Heart right ventricle (tissue), 16 donors: ENCODE measurements at regions of chr15 and their contacts with region 1.

Region 1: DNA sequence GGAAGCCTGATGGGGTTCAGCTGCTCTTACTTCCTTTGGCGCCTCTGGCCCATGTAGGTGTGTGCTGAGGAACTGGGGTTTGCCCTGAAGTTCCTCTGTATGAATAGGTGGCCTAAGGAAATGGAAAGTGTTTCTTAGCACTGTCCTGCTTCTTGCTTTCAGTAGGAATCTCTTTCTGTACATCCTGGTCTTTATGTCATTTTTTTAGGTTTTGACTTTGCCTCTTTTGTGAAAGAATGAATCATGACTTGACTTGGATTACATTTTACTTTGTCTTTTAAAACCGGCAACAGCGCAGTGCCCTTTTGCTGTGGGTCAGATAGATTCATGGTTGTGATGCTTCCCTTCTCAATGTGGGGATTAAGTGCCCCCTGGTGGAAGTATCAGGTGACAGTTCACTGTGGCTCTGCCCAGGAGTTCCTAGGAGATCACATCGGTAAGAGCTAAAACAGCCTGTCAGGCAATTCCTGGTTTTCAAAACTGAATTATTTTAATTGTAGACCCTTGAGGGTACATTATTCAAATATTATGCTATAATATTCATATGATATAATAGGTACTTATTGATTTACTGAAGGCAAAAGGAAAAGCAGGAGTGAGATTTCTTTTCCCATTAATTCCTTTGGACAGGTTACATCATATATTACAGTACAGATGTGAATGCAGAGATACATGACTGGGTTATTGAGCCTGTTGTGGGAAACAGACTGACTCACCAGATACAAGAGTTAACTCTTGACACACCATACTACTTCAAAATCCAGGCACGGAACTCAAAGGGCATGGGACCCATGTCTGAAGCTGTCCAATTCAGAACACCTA is 95.4 kb downstream of the HCN4 start:
- DNase-seq: peak in 1 of 2 donors; percentile 51
- ATAC-seq: peak; percentile 62 to 89 (median 78)
- H3K4me3 ChIP-seq: no peak overlapping the region
- H3K27ac ChIP-seq: no peak overlapping the region
- H3K4me1 ChIP-seq: peaks cover 0 to 6% (median 0%) of the 10 kb centered on the region in 9 donors
- H3K27me3 ChIP-seq: no peaks in the 10 kb centered on the region
- CTCF ChIP-seq: peak; percentile 38 to 86 (median 80)

Region 2: DNA sequence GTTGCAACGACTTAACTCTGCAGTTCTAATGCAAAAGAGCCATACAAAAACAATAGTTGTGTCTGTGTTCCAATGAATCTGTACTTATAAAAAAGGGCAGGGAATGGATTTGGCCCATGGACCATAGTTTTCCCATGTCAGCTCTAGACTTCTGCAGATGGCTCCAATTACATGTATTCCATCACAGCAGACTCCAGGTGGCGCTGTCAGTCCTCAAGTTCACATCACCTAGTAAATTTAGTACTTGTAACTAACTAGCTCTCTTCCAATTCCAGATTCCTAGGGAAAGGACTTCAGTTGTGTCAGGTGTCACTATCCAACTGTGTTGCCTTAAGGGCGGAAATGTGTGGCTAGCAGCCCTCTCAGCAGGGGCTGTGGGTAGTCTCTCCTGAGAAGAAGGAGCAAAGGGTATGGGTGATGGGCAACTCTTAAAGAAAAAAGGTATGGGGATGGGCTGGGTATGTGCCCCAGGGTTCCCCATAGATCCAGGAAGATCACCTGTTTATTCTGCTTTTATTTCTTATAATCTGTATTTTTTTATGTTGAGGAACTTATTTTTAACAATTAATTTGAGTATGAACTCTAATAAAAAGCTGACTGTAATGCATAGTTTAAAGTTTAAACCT is 551.2 kb before region 1 on chr15:
- intact Hi-C with region 1: loop called in 2 of 10 experiments (anchors 5 to 10 kb)
- DNase-seq: peak; percentile 24 to 54
- ATAC-seq: peak in 1 of 8 donors; percentile 31
- H3K4me3 ChIP-seq: no peak overlapping the region
- H3K27ac ChIP-seq: no peak overlapping the region
- H3K4me1 ChIP-seq: no peaks in the 10 kb centered on the region
- H3K27me3 ChIP-seq: no peaks in the 10 kb centered on the region
- CTCF ChIP-seq: peak; percentile 40 to 81 (median 67)

Region 3: GRCh38 chr15:72783563-72784237 is 489.7 kb before region 1 on chr15 and contains the start of gene ADPGK:
- intact Hi-C with region 1: loop called in 2 of 10 experiments (anchors 10 kb)
- DNase-seq: peak; percentile 88 to 92
- ATAC-seq: peak; percentile 96 to 99 (median 98)
- H3K4me3 ChIP-seq: peak within 1 kb of the TSS; percentile 63 to 100 (median 92)
- H3K27ac ChIP-seq: peak within 1 kb of the TSS; percentile 77 to 99 (median 94)
- H3K4me1 ChIP-seq: peaks cover 0 to 43% (median 24%) of the 10 kb centered on the region in 9 donors
- H3K27me3 ChIP-seq: no peaks in the 10 kb centered on the region
- CTCF ChIP-seq: no peak
- total RNA-seq, gene ADPGK: 6.4 to 21.8 (median 10.4) TPM

Region 4: DNA sequence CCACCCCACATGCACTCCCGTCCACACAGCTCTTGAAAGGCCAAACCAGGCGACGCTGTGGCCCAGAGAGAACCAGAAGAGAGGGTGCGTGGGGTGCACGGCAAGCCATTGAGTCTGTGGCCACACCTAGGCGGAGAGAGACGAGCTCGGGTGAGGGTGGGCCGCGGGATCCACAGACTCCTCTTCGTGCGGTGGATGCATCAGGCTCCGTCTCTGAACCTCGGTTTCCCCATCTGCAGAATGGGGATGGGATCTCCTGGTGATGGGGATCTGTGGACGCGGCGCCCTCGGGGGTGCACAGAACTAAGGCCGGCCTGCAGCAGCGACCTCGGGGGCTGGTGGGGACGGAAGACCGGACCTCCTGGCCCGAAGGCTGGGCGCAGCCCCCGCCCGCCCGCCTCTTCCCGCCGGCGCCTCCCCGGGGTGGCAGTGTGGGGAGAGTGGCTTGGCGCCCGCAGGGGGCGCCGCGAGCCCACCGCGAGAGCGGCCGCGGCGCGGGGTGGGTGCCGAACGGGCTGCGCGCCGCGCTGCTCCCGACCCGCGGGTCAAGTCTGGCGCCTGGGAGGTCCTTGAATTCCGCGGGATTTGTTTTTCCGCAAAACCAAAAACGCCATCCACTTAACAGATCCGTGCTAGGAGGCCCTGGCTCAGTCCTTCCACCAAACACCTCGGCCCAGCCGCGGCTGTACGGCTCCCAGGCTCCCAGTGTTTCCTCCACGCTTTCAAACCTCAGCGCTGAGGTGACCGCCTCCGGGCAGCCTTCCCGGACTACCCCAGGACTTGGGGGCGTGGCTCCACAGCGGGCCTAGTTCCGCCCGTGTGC is 476.7 kb before region 1 on chr15:
- intact Hi-C with region 1: loop called in 1 of 10 experiments (anchors 10 kb)
- DNase-seq: peak; percentile 26 to 54
- ATAC-seq: peak; percentile 79 to 94 (median 90)
- H3K4me3 ChIP-seq: peak overlapping the region; percentile 32 to 63 (median 54)
- H3K27ac ChIP-seq: peak overlapping the region in 1 of 10 donors; percentile 9
- H3K4me1 ChIP-seq: peaks cover 0 to 17% (median 8%) of the 10 kb centered on the region in 9 donors
- H3K27me3 ChIP-seq: peaks cover 0 to 71% (median 55%) of the 10 kb centered on the region in 7 donors
- CTCF ChIP-seq: peak; percentile 40 to 77 (median 57)

Region 5: DNA sequence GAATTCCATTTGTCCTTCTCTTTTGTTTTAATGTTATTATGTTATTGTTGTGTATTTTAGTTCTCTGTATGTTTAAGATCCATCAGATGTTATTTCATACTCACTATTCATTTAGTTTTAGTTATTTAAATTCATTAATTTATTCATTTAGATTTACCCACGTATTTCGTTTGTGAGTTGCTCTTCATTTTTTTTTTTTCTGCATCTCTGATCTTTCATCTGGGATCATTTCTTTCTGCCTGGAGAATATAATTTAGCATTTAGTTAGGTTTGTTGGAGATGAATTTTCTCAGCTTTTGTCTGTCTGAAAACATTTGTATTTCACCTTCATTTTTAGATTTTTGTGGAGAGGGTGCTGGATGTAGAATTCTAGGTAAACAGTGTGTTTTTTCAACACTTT is 208.3 kb before region 1 on chr15:
- intact Hi-C with region 1: no loop called
- DNase-seq: no peak
- ATAC-seq: no peak
- H3K4me3 ChIP-seq: no peak overlapping the region
- H3K27ac ChIP-seq: no peak overlapping the region
- H3K4me1 ChIP-seq: no peaks in the 10 kb centered on the region
- H3K27me3 ChIP-seq: peaks cover 0 to 25% (median 6%) of the 10 kb centered on the region in 7 donors
- CTCF ChIP-seq: no peak

Region 6: DNA sequence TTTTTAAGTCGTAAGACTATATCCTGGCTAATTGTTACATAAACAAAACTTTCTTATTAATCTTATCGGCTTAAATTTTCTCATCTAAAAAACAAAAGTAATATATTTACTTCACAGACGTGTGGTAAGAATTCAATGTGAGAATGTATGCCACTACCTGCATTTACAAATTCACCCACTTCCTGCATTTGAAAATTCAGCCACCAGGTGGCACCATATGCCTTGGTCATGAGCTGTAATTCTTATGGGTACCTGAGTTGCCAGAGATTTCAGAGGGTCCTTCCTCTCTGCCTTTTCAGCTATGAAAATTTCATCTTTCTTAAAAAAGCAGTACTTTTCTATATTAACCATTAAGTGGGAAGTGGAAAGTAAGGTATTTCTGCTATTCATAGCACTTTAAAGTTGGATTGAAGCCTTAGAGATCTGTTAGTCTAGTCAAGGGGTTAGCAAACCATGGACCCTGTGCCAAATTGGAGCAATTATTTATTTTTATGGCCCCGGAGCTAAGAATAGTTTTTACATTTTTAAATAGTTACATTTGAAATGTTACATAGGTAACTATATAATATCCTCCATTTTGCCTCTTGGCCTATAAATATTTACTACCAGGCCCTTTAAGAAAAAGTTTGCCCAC is 32.4 kb before region 1 on chr15:
- intact Hi-C with region 1: loop called in 4 of 10 experiments (anchors 1 to 2 kb)
- DNase-seq: peak in 1 of 2 donors; percentile 67
- ATAC-seq: peak in 2 of 8 donors; percentile 51 to 61
- H3K4me3 ChIP-seq: no peak overlapping the region
- H3K27ac ChIP-seq: no peak overlapping the region
- H3K4me1 ChIP-seq: peaks cover 0 to 12% (median 0%) of the 10 kb centered on the region in 9 donors
- H3K27me3 ChIP-seq: no peaks in the 10 kb centered on the region
- CTCF ChIP-seq: peak; percentile 70 to 94 (median 88)